Activated CD4-positive, alpha-beta T cell treated with anti-CD3 and anti-CD28 coated beads for 36 hours (primary cell): ENCODE measurements at regions of chr6 and their contacts with region 1.

Region 1: DNA sequence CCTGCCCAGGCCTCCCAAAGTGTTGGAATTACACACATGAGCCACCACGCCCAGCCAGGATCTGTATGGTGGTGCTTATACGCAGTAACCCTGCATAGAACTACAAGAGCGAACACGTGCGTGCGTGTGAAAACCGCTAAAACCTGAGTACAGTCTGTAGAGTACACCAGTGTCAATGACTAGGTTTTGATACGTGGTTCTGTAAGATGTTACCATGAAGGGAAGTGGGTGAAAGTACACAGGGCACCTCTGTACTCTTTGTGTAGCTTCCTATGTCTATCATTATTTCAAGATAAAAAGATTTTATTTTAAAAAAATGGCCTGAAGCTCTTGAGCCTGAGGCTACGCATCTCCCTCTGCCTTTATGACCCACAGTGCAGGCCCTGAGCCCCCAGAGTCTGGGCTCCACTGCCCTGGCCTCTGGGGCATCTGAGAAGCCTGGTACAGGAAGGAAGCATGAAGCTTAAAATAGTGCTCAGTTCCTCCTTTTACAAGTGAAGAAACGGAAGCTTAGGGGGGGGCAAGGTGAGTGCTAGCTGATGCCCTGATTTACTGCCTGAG is 21.6 kb downstream of the LY86 start:
- DNase-seq: peak; percentile 64
- ATAC-seq: peak; percentile 75
- H3K4me3 Mint-ChIP-seq: no peak overlapping the region
- H3K27ac Mint-ChIP-seq: peak overlapping the region; percentile 69
- H3K4me1 Mint-ChIP-seq: peaks cover 68% of the 10 kb centered on the region
- H3K27me3 Mint-ChIP-seq: no peaks in the 10 kb centered on the region

Region 2: GRCh38 chr6:6556738-6557505 is 53.2 kb before region 1 on chr6:
- CTCF ChIA-PET with region 1: no interaction called
- POLR2A ChIA-PET with region 1: no interaction called
- intact Hi-C with region 1: loop called in 1 of 2 experiments (anchors 5 kb)
- DNase-seq: peak; percentile 68
- ATAC-seq: peak; percentile 55
- H3K4me3 Mint-ChIP-seq: no peak overlapping the region
- H3K27ac Mint-ChIP-seq: no peak overlapping the region
- H3K4me1 Mint-ChIP-seq: peaks cover 38% of the 10 kb centered on the region
- H3K27me3 Mint-ChIP-seq: peaks cover 2% of the 10 kb centered on the region

Region 3: GRCh38 chr6:6588064-6588923 is 21.8 kb before region 1 on chr6 and contains the start of gene LY86:
- CTCF ChIA-PET with region 1: interaction called, 11 read pairs
- POLR2A ChIA-PET with region 1: no interaction called
- intact Hi-C with region 1: no loop called
- DNase-seq: no peak
- ATAC-seq: peak; percentile 38
- H3K4me3 Mint-ChIP-seq: peak within 1 kb of the TSS; percentile 66
- H3K27ac Mint-ChIP-seq: peak within 1 kb of the TSS; percentile 89
- H3K4me1 Mint-ChIP-seq: peaks cover 68% of the 10 kb centered on the region
- H3K27me3 Mint-ChIP-seq: no peaks in the 10 kb centered on the region
- total RNA-seq, gene LY86: 0.90 to 1.5 TPM

Region 4: DNA sequence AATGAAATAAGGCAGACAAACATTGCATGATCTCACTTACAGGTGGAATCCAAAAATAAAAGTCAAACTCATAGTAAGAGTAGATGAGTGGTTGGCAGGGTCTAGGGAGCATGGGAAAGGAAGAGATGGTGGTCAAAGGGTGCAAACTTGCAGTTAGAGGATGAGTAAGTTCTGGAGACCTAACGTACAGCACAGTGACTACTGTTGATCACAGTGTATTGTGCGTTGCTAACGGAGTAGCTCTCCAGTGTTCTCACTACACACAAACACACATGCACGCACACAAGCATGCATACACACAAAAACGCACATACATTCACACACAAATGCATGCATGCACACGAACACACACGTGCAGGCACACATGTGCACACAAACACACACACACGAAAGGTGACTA is 33.3 kb after region 1 on chr6:
- CTCF ChIA-PET with region 1: no interaction called
- POLR2A ChIA-PET with region 1: no interaction called
- intact Hi-C with region 1: no loop called
- DNase-seq: no peak
- ATAC-seq: peak; percentile 89
- H3K4me3 Mint-ChIP-seq: no peak overlapping the region
- H3K27ac Mint-ChIP-seq: no peak overlapping the region
- H3K4me1 Mint-ChIP-seq: peaks cover 6% of the 10 kb centered on the region
- H3K27me3 Mint-ChIP-seq: no peaks in the 10 kb centered on the region

Region 5: GRCh38 chr6:6659600-6660327 is 49.7 kb after region 1 on chr6:
- CTCF ChIA-PET with region 1: interaction called, 3 read pairs
- POLR2A ChIA-PET with region 1: no interaction called
- intact Hi-C with region 1: loop called (anchors 2 kb)
- DNase-seq: no peak
- ATAC-seq: no peak
- H3K4me3 Mint-ChIP-seq: no peak overlapping the region
- H3K27ac Mint-ChIP-seq: peak overlapping the region; percentile 95
- H3K4me1 Mint-ChIP-seq: peaks cover 72% of the 10 kb centered on the region
- H3K27me3 Mint-ChIP-seq: no peaks in the 10 kb centered on the region

Region 6: DNA sequence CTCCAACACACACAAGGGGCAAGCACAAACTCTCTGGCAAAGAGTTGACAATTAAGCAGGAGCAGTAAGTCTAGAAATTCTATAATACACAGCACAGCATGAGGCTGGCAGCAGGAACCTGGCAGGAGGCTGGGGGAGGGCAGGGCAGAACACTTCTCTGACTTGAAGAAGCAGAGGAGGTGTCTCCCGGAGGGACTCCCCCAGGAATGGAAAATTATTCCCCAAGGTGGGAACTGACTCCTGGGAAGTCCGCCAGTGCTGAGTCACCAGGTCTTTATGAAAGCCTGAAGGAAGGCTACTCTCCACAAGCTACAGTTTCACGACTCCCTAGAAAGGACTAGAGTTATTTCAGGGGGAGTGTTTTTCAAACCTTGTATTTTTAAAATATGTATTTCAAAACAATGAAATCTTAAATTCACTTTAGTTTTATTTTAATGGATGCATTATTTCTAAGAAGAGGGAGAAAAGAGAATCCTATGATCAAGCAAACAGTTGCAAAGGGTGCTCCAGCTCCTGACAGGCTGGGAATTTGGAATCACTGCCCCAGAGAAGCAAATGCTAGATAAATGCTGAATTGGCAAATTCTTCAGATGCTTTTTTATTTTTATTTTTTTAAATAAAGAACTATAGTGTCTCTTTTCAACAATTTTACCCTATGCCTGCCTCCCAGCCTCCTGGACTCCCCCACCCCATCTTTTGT is 171.2 kb after region 1 on chr6:
- CTCF ChIA-PET with region 1: no interaction called
- POLR2A ChIA-PET with region 1: no interaction called
- intact Hi-C with region 1: no loop called
- DNase-seq: no peak
- ATAC-seq: no peak
- H3K4me3 Mint-ChIP-seq: no peak overlapping the region
- H3K27ac Mint-ChIP-seq: no peak overlapping the region
- H3K4me1 Mint-ChIP-seq: no peaks in the 10 kb centered on the region
- H3K27me3 Mint-ChIP-seq: peaks cover 9% of the 10 kb centered on the region